ENCODE measurements at regions of chr4 and their contacts with region 1.

Region 1: GRCh38 chr4:77025643-77026321 is 50.0 kb downstream of the CCNI start:
- DNase-seq: peak; percentile 18
- ATAC-seq: peak; percentile 86
- H3K4me3 Mint-ChIP-seq: no peak overlapping the region
- H3K27ac Mint-ChIP-seq: no peak overlapping the region
- H3K4me1 Mint-ChIP-seq: peaks cover 42% of the 10 kb centered on the region
- H3K27me3 Mint-ChIP-seq: peaks cover 8% of the 10 kb centered on the region

Region 2: GRCh38 chr4:76301068-76301774 is 724.6 kb before region 1 on chr4:
- CTCF ChIA-PET with region 1: no interaction called
- POLR2A ChIA-PET with region 1: no interaction called
- intact Hi-C with region 1: loop called in 1 of 2 experiments (anchors 2 kb)
- DNase-seq: peak; percentile 55
- ATAC-seq: peak; percentile 94
- H3K4me3 Mint-ChIP-seq: no peak overlapping the region
- H3K27ac Mint-ChIP-seq: no peak overlapping the region
- H3K4me1 Mint-ChIP-seq: peaks cover 29% of the 10 kb centered on the region
- H3K27me3 Mint-ChIP-seq: peaks cover 23% of the 10 kb centered on the region

Region 3: DNA sequence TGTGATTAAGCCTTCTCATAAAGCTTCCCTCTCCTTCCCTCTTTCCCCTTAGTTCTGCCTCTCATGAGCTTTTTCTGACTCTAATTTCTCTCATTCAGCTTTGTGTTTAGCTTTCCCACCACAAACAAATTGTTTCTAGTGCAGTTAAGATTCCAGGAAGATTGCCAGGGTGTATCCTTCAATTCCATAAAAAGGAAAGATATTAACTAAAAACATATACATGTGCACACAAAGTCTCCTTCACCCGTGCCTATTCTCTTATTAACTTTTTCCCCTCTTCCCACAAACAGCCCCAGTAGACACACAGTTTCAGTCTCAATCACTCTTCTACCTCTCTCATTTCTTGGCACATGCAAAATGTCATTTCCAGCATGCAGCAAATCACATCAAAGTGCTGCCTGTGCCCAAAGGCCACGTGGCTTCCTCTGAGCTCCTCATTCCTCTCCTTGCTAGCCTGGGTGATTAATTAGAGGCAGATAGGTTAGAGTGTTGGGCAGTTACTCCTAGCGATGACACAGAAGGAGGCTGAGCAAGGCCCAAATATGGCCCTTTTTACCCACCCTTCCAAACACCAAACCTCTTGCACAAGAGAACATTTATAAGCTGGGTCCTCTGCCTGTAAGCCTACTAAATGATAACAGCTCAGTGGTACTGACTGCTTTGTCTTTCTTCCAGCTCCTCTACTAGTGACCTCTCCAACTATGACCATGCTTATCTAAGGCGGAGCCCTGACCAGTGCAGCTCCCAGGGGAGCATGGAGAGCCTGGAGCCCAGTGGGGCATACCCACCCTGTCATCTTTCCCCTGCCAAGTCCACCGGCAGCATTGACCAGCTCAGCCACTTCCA is 287.5 kb before region 1 on chr4:
- CTCF ChIA-PET with region 1: no interaction called
- POLR2A ChIA-PET with region 1: no interaction called
- intact Hi-C with region 1: loop called in 1 of 2 experiments (anchors 5 kb)
- DNase-seq: peak; percentile 74
- ATAC-seq: peak; percentile 98
- H3K4me3 Mint-ChIP-seq: no peak overlapping the region
- H3K27ac Mint-ChIP-seq: peak overlapping the region; percentile 70
- H3K4me1 Mint-ChIP-seq: peaks cover 18% of the 10 kb centered on the region
- H3K27me3 Mint-ChIP-seq: peaks cover 12% of the 10 kb centered on the region

Region 4: DNA sequence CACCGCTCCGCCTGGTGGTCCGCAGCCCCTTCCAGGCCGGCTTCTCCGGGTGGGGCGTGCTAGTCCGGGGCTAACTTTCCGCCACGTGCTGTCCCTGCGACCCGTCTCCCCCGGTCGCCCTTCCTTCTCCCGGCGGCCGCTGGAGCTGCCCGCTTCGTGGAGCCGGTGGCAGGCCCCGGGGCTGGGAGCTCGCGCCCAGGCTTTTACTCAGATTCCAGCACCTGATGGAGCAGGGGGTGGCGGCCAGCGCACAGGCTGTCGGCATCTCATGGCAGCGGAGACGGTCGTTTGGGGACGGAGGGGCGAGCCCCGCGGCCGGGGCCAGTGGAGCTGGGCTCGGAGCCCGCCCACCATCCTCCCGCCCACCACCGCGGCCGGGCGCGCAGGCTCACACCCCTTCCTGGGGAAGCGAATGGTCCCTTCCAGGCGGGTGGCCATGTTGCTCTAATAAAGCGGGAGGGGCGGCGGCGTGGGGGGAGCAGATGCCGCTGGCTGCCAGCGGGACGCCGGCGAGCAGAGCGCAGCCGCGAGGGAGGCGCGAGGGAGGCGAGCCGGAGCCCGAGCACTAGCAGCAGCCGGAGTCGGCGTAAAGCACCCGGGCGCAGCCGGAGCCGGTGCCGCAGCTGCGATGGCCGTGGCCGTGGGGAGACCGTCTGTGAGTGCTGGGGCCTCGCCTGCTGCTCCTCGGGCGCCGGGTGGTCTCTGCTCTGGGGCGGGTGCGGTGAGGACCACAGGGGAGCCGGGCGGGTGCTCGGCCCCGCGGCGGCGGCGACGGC is 76.3 kb before region 1 on chr4 and contains the start of gene SEPTIN11:
- CTCF ChIA-PET with region 1: no interaction called
- POLR2A ChIA-PET with region 1: no interaction called
- intact Hi-C with region 1: loop called in 1 of 2 experiments (anchors 1 kb)
- DNase-seq: peak; percentile 86
- ATAC-seq: peak; percentile 72
- H3K4me3 Mint-ChIP-seq: peak within 1 kb of the TSS; percentile 83
- H3K27ac Mint-ChIP-seq: peak within 1 kb of the TSS; percentile 49
- H3K4me1 Mint-ChIP-seq: peaks cover 13% of the 10 kb centered on the region
- H3K27me3 Mint-ChIP-seq: peaks cover 22% of the 10 kb centered on the region
- total RNA-seq, gene SEPTIN11: 15.5 to 34.5 TPM

Region 5: GRCh38 chr4:76993787-76994641 is 31.8 kb before region 1 on chr4:
- CTCF ChIA-PET with region 1: interaction called, 8 read pairs
- POLR2A ChIA-PET with region 1: no interaction called
- intact Hi-C with region 1: loop called (anchors 1 kb)
- DNase-seq: peak; percentile 70
- ATAC-seq: peak; percentile 80
- H3K4me3 Mint-ChIP-seq: peak overlapping the region; percentile 41
- H3K27ac Mint-ChIP-seq: peak overlapping the region; percentile 55
- H3K4me1 Mint-ChIP-seq: peaks cover 63% of the 10 kb centered on the region
- H3K27me3 Mint-ChIP-seq: peaks cover 7% of the 10 kb centered on the region

Region 6: GRCh38 chr4:77586951-77587383 is 561.2 kb after region 1 on chr4:
- CTCF ChIA-PET with region 1: no interaction called
- POLR2A ChIA-PET with region 1: no interaction called
- intact Hi-C with region 1: loop called in 1 of 2 experiments (anchors 2 kb)
- DNase-seq: peak; percentile 87
- ATAC-seq: peak; percentile 94
- H3K4me3 Mint-ChIP-seq: peak overlapping the region; percentile 54
- H3K27ac Mint-ChIP-seq: peak overlapping the region; percentile 84
- H3K4me1 Mint-ChIP-seq: peaks cover 66% of the 10 kb centered on the region
- H3K27me3 Mint-ChIP-seq: peaks cover 16% of the 10 kb centered on the region

Measured in activated CD4-positive, alpha-beta T cell treated with anti-CD3 and anti-CD28 coated beads for 36 hours (primary cell).